ENCODE measurements at regions of chr11 and their contacts with region 1.

Region 1: GRCh38 chr11:8006349-8006977 is 19.3 kb downstream of the EIF3F start:
- DNase-seq: no peak
- ATAC-seq: peak; percentile 86

Region 2: GRCh38 chr11:8099291-8099899 is 92.9 kb after region 1 on chr11:
- intact Hi-C with region 1: loop called (anchors 2 kb)
- DNase-seq: no peak
- ATAC-seq: peak; percentile 48

Measured in Right ventricle myocardium inferior (tissue), 1 donor.